ENCODE measurements at regions of chr3 and their contacts with region 1.

Region 1: DNA sequence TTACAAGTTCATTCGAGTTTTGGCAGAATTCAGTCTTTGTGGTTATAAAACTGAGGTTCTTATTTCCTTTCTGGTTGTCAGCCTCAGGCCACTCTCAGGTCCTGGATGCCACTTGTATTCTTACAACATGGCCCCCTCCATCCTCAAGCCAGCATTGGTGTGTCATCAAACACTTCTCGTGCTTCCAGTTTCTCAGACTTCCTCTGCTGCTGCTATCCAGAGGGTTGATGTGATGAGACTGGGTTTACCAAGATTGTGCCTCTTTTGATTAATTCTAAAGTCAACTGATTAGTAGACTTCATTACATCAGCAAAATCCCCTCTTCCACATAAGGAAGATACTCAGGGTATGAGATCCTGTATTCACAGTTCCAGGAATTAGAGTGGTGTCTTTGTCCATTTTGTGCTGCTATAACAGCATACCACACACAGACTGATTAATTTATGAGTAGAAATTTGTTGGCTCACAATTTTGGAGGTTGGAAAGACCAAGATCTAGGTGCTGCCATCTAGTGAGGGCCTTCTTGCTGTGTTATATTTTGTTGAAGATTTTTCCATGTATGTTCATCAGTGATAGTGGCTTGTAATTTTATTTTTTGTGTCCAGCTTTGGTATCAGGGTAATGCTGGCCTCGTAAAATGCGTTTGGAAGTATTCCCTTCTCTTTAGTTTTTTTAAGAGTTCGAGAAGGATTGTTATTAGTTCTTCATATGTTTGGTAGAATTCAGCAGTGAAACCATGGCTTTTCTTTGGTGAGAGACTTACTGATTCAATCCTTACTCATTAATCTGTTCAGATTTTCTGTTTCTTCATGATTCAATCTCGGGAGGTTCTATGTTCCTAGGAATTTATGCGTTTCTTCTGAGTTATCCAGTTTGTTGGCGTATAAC is 11.1 kb downstream of the LRCH3 start:
- DNase-seq: no peak
- H3K4me3 ChIP-seq: no peak overlapping the region
- H3K27ac ChIP-seq: no peak overlapping the region
- H3K4me1 ChIP-seq: no peaks in the 10 kb centered on the region
- H3K27me3 ChIP-seq: no peaks in the 10 kb centered on the region
- CTCF ChIP-seq: peak in 1 of 3 experiments; percentile 38; a peak in 2 of 4 replicates
- EP300 ChIP-seq: no peak
- POLR2A ChIP-seq: no peak
- RAD21 ChIP-seq: peak; percentile 16 to 22; a peak in 2 of 4 replicates

Region 2: DNA sequence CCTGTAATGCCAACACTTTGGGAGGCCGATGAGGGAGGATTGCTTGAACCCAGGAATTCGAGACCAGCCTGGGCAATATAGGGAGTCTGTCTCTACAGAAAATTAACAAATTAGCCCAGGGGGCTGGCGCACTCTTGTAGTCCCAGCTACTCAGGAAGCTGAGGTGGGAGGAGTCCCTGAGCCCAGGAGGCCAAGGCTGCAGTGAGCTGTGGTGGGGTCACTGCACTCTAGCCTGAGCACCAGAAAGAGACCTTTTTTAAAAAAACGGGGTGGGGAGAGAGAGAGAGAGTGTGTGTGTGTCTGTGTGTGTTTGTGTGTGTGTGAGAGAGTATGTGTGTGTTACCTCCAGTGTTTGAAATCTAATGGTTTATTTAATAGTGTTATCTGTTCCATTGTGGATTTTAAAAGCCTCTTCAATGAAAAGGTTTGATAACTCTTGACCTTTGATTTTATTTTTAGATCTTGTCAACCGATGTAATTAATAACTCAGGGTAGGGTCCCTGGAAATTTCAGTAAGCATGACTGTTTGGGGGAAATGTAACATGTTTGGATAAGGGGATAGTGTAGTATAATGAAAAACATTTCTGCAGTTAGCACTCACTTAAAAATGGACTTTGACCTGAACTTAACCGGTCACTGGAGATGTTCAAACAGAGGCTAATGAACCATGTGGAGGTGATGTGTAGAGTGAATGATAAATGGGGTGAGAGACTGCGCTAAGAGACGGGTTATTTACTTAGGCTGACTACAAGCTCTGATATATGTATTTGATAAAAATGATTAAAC is 18.6 kb after region 1 on chr3:
- CTCF ChIA-PET with region 1: interaction called, 18 read pairs
- POLR2A ChIA-PET with region 1: interaction called, 3 read pairs
- DNase-seq: no peak
- H3K4me3 ChIP-seq: no peak overlapping the region
- H3K27ac ChIP-seq: no peak overlapping the region
- H3K4me1 ChIP-seq: no peaks in the 10 kb centered on the region
- H3K27me3 ChIP-seq: no peaks in the 10 kb centered on the region
- CTCF ChIP-seq: no peak
- EP300 ChIP-seq: no peak
- POLR2A ChIP-seq: no peak
- RAD21 ChIP-seq: no peak

Region 3: GRCh38 chr3:198088421-198088955 is 286.4 kb after region 1 on chr3:
- CTCF ChIA-PET with region 1: no interaction called
- POLR2A ChIA-PET with region 1: no interaction called
- DNase-seq: no peak
- H3K4me3 ChIP-seq: no peak overlapping the region
- H3K27ac ChIP-seq: no peak overlapping the region
- H3K4me1 ChIP-seq: no peaks in the 10 kb centered on the region
- H3K27me3 ChIP-seq: peaks cover 1 to 10% (median 6%) of the 10 kb centered on the region in 4 experiments; a peak in 4 of 7 replicates
- CTCF ChIP-seq: no peak
- EP300 ChIP-seq: no peak
- POLR2A ChIP-seq: no peak
- RAD21 ChIP-seq: no peak

Measured in H1 (cell line).